Activated naive CD4-positive, alpha-beta T cell treated with anti-CD3 and anti-CD28 coated beads for 36 hours (primary cell): ENCODE measurements at regions of chr1 and their contacts with region 1.

Region 1: GRCh38 chr1:186605762-186606350 is 74.4 kb downstream of the PTGS2 start:
- DNase-seq: peak; percentile 56
- H3K4me3 Mint-ChIP-seq: no peak overlapping the region
- H3K27ac Mint-ChIP-seq: no peak overlapping the region
- H3K4me1 Mint-ChIP-seq: no peaks in the 10 kb centered on the region
- H3K27me3 Mint-ChIP-seq: peaks cover 35% of the 10 kb centered on the region

Region 2: DNA sequence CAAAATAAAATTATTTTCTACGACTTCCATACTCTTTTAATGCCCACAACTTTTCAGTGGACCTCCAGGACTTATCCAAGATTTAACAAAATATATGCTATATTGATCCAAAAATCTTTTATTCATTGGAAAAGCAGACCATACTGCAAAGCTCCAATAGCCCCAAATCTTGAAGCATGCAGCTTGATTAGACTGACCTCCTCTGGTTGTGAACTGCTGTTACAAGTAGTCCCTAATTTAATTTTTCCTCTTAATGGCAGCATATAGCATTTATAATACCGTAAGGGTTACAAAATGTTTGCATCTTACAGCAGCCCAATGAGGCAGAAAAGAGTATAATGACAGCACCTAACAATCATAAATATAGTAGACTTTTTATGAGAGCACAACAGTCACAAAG is 280.6 kb before region 1 on chr1:
- CTCF ChIA-PET with region 1: no interaction called
- intact Hi-C with region 1: no loop called
- DNase-seq: no peak
- H3K4me3 Mint-ChIP-seq: no peak overlapping the region
- H3K27ac Mint-ChIP-seq: no peak overlapping the region
- H3K4me1 Mint-ChIP-seq: peaks cover 39% of the 10 kb centered on the region
- H3K27me3 Mint-ChIP-seq: no peaks in the 10 kb centered on the region

Region 3: DNA sequence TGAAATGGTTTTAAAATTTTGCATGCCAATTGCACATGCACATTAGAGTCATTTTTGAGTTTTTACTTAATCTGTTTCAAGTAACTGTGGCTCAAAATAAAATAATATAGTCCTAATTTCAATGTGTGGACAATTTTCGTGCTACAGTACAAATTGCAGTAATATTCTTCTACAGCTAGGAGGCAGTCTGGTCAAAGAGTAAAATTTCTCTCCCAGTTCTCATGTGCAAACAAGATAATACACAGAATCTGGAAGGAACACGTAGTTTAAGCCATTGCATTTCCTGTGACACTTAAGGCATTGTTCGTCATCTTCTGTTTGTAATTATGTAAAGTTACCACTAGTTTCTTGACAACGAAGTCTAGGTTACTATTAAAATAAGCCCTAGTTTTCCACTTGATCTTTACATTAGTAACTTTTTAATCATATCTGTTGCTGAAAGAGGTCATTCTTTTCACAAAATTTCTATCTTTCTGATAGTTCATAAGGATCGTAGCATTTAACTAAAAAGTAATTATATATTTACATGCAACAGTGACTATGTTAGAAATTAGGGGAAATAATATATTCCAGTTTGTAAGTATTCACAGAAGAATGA is 201.3 kb before region 1 on chr1:
- CTCF ChIA-PET with region 1: no interaction called
- intact Hi-C with region 1: loop called (anchors 5 kb)
- DNase-seq: no peak
- H3K4me3 Mint-ChIP-seq: no peak overlapping the region
- H3K27ac Mint-ChIP-seq: no peak overlapping the region
- H3K4me1 Mint-ChIP-seq: no peaks in the 10 kb centered on the region
- H3K27me3 Mint-ChIP-seq: no peaks in the 10 kb centered on the region

Region 4: GRCh38 chr1:186559601-186560116 is 46.2 kb before region 1 on chr1:
- CTCF ChIA-PET with region 1: no interaction called
- intact Hi-C with region 1: no loop called
- DNase-seq: no peak
- H3K4me3 Mint-ChIP-seq: no peak overlapping the region
- H3K27ac Mint-ChIP-seq: no peak overlapping the region
- H3K4me1 Mint-ChIP-seq: no peaks in the 10 kb centered on the region
- H3K27me3 Mint-ChIP-seq: no peaks in the 10 kb centered on the region

Region 5: GRCh38 chr1:186680245-186681061 is 74.6 kb after region 1 on chr1 and contains the start of gene PTGS2:
- CTCF ChIA-PET with region 1: interaction called, 9 read pairs
- intact Hi-C with region 1: loop called (anchors 1 kb)
- DNase-seq: peak; percentile 65
- H3K4me3 Mint-ChIP-seq: peak within 1 kb of the TSS; percentile 78
- H3K27ac Mint-ChIP-seq: no peak within 1 kb of the TSS
- H3K4me1 Mint-ChIP-seq: peaks cover 10% of the 10 kb centered on the region
- H3K27me3 Mint-ChIP-seq: peaks cover 52% of the 10 kb centered on the region
- total RNA-seq, gene PTGS2: 1.8 to 2.0 TPM

Region 6: DNA sequence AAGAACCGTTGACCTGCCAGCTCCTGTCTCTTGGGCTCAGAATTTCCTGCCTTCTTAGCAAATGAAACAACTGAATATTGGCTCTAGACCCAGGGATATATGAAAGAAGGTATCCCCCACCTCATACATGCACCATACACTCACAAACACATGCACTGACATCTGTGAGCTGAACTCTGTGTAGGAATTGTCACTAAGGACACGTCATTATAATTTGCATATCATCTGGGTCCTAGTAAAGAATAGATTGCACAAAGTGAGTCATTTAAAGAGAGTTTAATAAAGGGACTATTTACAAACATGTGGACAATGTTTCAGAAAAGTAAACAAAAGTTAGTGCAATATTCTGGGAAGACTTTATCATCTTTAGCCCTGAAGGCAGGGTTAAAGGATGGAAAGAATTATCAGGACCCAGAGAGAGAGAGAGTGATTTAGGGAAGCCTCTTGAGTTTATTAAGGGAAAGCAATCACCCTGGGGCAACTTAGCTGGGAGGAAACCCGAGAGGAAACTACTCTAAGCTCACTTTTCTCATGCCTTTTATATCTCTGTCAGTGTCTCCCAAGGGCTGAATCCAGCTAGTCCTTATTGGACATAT is 148.8 kb after region 1 on chr1:
- CTCF ChIA-PET with region 1: no interaction called
- intact Hi-C with region 1: no loop called
- DNase-seq: no peak
- H3K4me3 Mint-ChIP-seq: no peak overlapping the region
- H3K27ac Mint-ChIP-seq: no peak overlapping the region
- H3K4me1 Mint-ChIP-seq: no peaks in the 10 kb centered on the region
- H3K27me3 Mint-ChIP-seq: peaks cover 7% of the 10 kb centered on the region

Region 7: GRCh38 chr1:186806477-186806876 is 200.6 kb after region 1 on chr1:
- CTCF ChIA-PET with region 1: interaction called, 5 read pairs
- intact Hi-C with region 1: loop called (anchors 5 kb)
- DNase-seq: peak; percentile 19
- H3K4me3 Mint-ChIP-seq: no peak overlapping the region
- H3K27ac Mint-ChIP-seq: no peak overlapping the region
- H3K4me1 Mint-ChIP-seq: no peaks in the 10 kb centered on the region
- H3K27me3 Mint-ChIP-seq: no peaks in the 10 kb centered on the region